Common myeloid progenitor, CD34-positive (primary cell): ENCODE measurements at regions of chr15 and their contacts with region 1.

Region 1: GRCh38 chr15:89129123-89129815 is 41.0 kb downstream of the ABHD2 start:
- DNase-seq: peak in 2 of 3 donors; percentile 46 to 59
- H3K4me3 ChIP-seq: no peak overlapping the region
- H3K27ac ChIP-seq: peak overlapping the region in 1 of 2 experiments; percentile 59
- H3K4me1 ChIP-seq: peaks cover 35 to 61% (median 58%) of the 10 kb centered on the region in 4 experiments
- H3K27me3 ChIP-seq: no peaks in the 10 kb centered on the region

Region 2: GRCh38 chr15:89087830-89088604 is 41.3 kb before region 1 on chr15 and contains the start of gene ABHD2:
- CTCF ChIA-PET with region 1: interaction called, 41 read pairs
- POLR2A ChIA-PET with region 1: interaction called, 3 read pairs
- DNase-seq: peak; percentile 100
- H3K4me3 ChIP-seq: peak within 1 kb of the TSS; percentile 70 to 95 (median 91)
- H3K27ac ChIP-seq: peak within 1 kb of the TSS; percentile 77 to 89
- H3K4me1 ChIP-seq: peaks cover 27 to 70% (median 56%) of the 10 kb centered on the region in 4 experiments
- H3K27me3 ChIP-seq: no peaks in the 10 kb centered on the region

Region 3: GRCh38 chr15:89101302-89102191 is 27.7 kb before region 1 on chr15:
- CTCF ChIA-PET with region 1: interaction called, 59 read pairs
- POLR2A ChIA-PET with region 1: no interaction called
- DNase-seq: peak in 1 of 3 donors; percentile 44
- H3K4me3 ChIP-seq: no peak overlapping the region
- H3K27ac ChIP-seq: no peak overlapping the region
- H3K4me1 ChIP-seq: peaks cover 0 to 15% (median 5%) of the 10 kb centered on the region in 4 experiments
- H3K27me3 ChIP-seq: no peaks in the 10 kb centered on the region

Region 4: GRCh38 chr15:89112341-89112971 is 16.8 kb before region 1 on chr15:
- CTCF ChIA-PET with region 1: interaction called, 20 read pairs
- POLR2A ChIA-PET with region 1: interaction called, 3 read pairs
- DNase-seq: no peak
- H3K4me3 ChIP-seq: no peak overlapping the region
- H3K27ac ChIP-seq: no peak overlapping the region
- H3K4me1 ChIP-seq: peaks cover under 1 to 28% (median 22%) of the 10 kb centered on the region in 4 experiments
- H3K27me3 ChIP-seq: no peaks in the 10 kb centered on the region

Region 5: DNA sequence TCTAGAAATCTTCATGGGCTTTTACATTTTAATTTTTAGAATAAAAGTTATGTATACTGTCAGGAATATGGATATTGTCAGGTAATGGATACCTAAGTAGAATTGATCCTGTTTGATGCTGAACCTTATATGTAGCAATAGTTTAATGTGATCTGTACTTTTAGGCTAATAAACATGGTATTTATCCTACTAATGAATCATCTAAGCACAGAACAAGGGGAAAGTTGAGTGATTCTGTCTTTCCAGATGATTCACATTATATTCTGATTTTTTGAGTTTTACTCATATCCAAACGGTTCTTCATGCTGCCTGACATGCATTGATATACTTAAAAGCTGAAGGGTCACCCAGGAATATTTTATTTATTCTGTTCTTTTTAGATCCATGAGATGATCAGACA is 149.0 kb after region 1 on chr15:
- CTCF ChIA-PET with region 1: no interaction called
- POLR2A ChIA-PET with region 1: no interaction called
- DNase-seq: no peak
- H3K4me3 ChIP-seq: no peak overlapping the region
- H3K27ac ChIP-seq: no peak overlapping the region
- H3K4me1 ChIP-seq: no peaks in the 10 kb centered on the region
- H3K27me3 ChIP-seq: no peaks in the 10 kb centered on the region